BJ (cell line): ENCODE measurements at regions of chr18 and their contacts with region 1.

Region 1: GRCh38 chr18:46622999-46623398 is 34.0 kb downstream of the LOXHD1 start:
- DNase-seq: no peak
- H3K4me3 ChIP-seq: no peak overlapping the region
- H3K27me3 ChIP-seq: no peaks in the 10 kb centered on the region
- CTCF ChIP-seq: no peak

Region 2: GRCh38 chr18:46356278-46357033 is 266.5 kb before region 1 on chr18:
- CTCF ChIA-PET with region 1: no interaction called
- POLR2A ChIA-PET with region 1: no interaction called
- DNase-seq: no peak
- H3K4me3 ChIP-seq: no peak overlapping the region
- H3K27me3 ChIP-seq: 0 out of 2 replicates have a peak, but pooled peaks cover 2% of the 10 kb centered on the region
- CTCF ChIP-seq: no peak

Region 3: DNA sequence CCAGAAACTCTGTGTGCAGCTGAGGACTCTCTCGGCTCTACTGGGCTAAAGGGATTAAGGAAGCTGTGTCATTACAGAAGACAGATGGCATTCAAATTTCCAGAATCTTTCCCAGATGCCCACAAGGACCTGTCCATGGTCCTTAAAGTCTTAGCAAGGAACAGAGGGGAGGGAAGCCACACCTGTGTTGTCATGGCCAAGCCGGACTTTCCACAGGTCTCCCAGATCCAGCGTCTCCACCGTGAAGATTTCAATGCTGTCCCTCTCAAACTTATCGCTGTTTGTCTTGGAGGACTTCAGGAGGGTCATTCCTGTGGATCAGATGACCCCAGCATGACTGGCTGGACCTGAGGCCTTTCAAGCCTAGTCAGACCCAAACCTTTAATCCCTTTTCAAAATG is 80.5 kb before region 1 on chr18:
- CTCF ChIA-PET with region 1: no interaction called
- POLR2A ChIA-PET with region 1: no interaction called
- DNase-seq: no peak
- H3K4me3 ChIP-seq: no peak overlapping the region
- H3K27me3 ChIP-seq: no peaks in the 10 kb centered on the region
- CTCF ChIP-seq: no peak

Region 4: GRCh38 chr18:46609048-46609447 is 14.0 kb before region 1 on chr18:
- CTCF ChIA-PET with region 1: interaction called, 11 read pairs
- POLR2A ChIA-PET with region 1: no interaction called
- DNase-seq: no peak
- H3K4me3 ChIP-seq: no peak overlapping the region
- H3K27me3 ChIP-seq: peaks cover 2% of the 10 kb centered on the region; the same call in 1 of the 2 replicates
- CTCF ChIP-seq: no peak